ENCODE measurements at regions of chr6 and their contacts with region 1.

Region 1: GRCh38 chr6:118651282-118652050 is at the start of gene CEP85L:
- DNase-seq: peak; percentile 82 to 84
- H3K4me3 ChIP-seq: peak within 1 kb of the TSS; percentile 82
- H3K27ac ChIP-seq: peak within 1 kb of the TSS; percentile 30; the same call in 1 of the 2 replicates
- H3K4me1 ChIP-seq: peaks cover 23% of the 10 kb centered on the region
- H3K27me3 ChIP-seq: no peaks in the 10 kb centered on the region
- CTCF ChIP-seq: no peak
- total RNA-seq, gene CEP85L: 3.0 TPM in 2 replicates

Region 2: GRCh38 chr6:118598324-118598723 is 53.1 kb before region 1 on chr6:
- CTCF ChIA-PET with region 1: no interaction called
- POLR2A ChIA-PET with region 1: interaction called, 11 read pairs
- intact Hi-C with region 1: no loop called
- DNase-seq: no peak
- H3K4me3 ChIP-seq: no peak overlapping the region
- H3K27ac ChIP-seq: no peak overlapping the region
- H3K4me1 ChIP-seq: no peaks in the 10 kb centered on the region
- H3K27me3 ChIP-seq: no peaks in the 10 kb centered on the region
- CTCF ChIP-seq: no peak

Region 3: GRCh38 chr6:118677193-118677592 is 25.7 kb after region 1 on chr6:
- CTCF ChIA-PET with region 1: interaction called, 10 read pairs
- POLR2A ChIA-PET with region 1: no interaction called
- intact Hi-C with region 1: no loop called
- DNase-seq: no peak
- H3K4me3 ChIP-seq: no peak overlapping the region
- H3K27ac ChIP-seq: no peak overlapping the region
- H3K4me1 ChIP-seq: peaks cover 30% of the 10 kb centered on the region
- H3K27me3 ChIP-seq: no peaks in the 10 kb centered on the region
- CTCF ChIP-seq: no peak

Region 4: GRCh38 chr6:118709859-118710350 is 58.4 kb after region 1 on chr6:
- CTCF ChIA-PET with region 1: interaction called, 10 read pairs
- POLR2A ChIA-PET with region 1: no interaction called
- intact Hi-C with region 1: loop called (anchors 2 kb)
- DNase-seq: peak in 1 of 2 experiments; percentile 82
- H3K4me3 ChIP-seq: peak overlapping the region; percentile 71
- H3K27ac ChIP-seq: peak overlapping the region; percentile 93
- H3K4me1 ChIP-seq: peaks cover 52% of the 10 kb centered on the region
- H3K27me3 ChIP-seq: no peaks in the 10 kb centered on the region
- CTCF ChIP-seq: no peak

Region 5: GRCh38 chr6:118776607-118777549 is 125.4 kb after region 1 on chr6:
- CTCF ChIA-PET with region 1: no interaction called
- POLR2A ChIA-PET with region 1: no interaction called
- intact Hi-C with region 1: loop called (anchors 2 kb)
- DNase-seq: peak; percentile 51 to 97
- H3K4me3 ChIP-seq: peak overlapping the region; percentile 13; the same call in 1 of the 2 replicates
- H3K27ac ChIP-seq: peak overlapping the region; percentile 44
- H3K4me1 ChIP-seq: peaks cover 20% of the 10 kb centered on the region
- H3K27me3 ChIP-seq: no peaks in the 10 kb centered on the region
- CTCF ChIP-seq: peak; percentile 91